SK-N-SH (cell line): ENCODE measurements at regions of chr2 and their contacts with region 1.

Region 1: DNA sequence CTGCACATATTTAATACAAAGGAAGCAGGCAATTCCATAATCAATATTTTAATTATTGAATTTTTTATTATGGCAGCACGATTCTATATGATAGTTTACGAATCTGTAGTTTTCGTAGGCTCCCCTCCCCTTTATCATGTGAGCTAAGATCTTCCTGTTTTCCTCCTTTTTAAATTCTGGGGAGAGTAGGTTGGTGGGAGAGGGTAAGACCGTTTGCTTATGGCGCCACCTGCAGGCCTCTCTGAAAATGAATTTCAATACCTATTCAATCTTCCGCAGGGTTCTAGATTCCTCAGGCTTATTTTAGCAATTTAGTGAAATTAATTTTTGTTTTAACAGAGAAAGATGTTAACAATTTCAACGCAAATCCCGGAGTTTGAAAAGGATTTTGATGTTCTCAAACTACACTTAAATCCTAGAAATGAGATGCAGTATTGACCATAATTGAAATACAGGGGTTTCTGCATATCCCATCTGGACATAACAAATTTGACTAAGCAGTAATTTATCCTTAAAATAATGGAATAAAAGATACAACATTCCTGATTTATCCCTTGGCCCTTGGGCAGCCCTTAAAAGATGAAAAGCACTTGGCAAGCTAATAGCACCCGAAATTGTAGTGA is 12.8 kb upstream of the GBX2 start:
- DNase-seq: peak; percentile 84
- H3K4me3 ChIP-seq: no peak overlapping the region; a peak in 1 of 4 replicates
- H3K27ac ChIP-seq: peak overlapping the region in 1 of 2 experiments; percentile 58; a peak in 2 of 4 replicates
- H3K4me1 ChIP-seq: peaks cover 0 to 16% of the 10 kb centered on the region in 2 experiments; a peak in 3 of 4 replicates
- H3K27me3 ChIP-seq: no peaks in the 10 kb centered on the region
- CTCF ChIP-seq: peak; percentile 89
- EP300 ChIP-seq: no peak
- RAD21 ChIP-seq: peak; percentile 88

Region 2: GRCh38 chr2:235766278-235766677 is 414.7 kb before region 1 on chr2:
- CTCF ChIA-PET with region 1: interaction called, 163 read pairs
- POLR2A ChIA-PET with region 1: no interaction called
- DNase-seq: peak; percentile 81
- H3K4me3 ChIP-seq: no peak overlapping the region; a peak in 1 of 4 replicates
- H3K27ac ChIP-seq: peak overlapping the region in 1 of 2 experiments; percentile 43; a peak in 1 of 4 replicates
- H3K4me1 ChIP-seq: no peaks in the 10 kb centered on the region
- H3K27me3 ChIP-seq: no peaks in the 10 kb centered on the region
- CTCF ChIP-seq: peak; percentile 91
- EP300 ChIP-seq: no peak
- RAD21 ChIP-seq: peak; percentile 84

Region 3: GRCh38 chr2:235779444-235779896 is 401.5 kb before region 1 on chr2:
- CTCF ChIA-PET with region 1: interaction called, 372 read pairs
- POLR2A ChIA-PET with region 1: no interaction called
- DNase-seq: peak; percentile 78
- H3K4me3 ChIP-seq: no peak overlapping the region; a peak in 1 of 4 replicates
- H3K27ac ChIP-seq: no peak overlapping the region
- H3K4me1 ChIP-seq: no peaks in the 10 kb centered on the region
- H3K27me3 ChIP-seq: no peaks in the 10 kb centered on the region
- CTCF ChIP-seq: peak; percentile 95
- EP300 ChIP-seq: no peak
- RAD21 ChIP-seq: peak; percentile 89

Region 4: GRCh38 chr2:235806986-235807750 is 373.8 kb before region 1 on chr2:
- CTCF ChIA-PET with region 1: interaction called, 248 read pairs
- POLR2A ChIA-PET with region 1: no interaction called
- DNase-seq: no peak
- H3K4me3 ChIP-seq: no peak overlapping the region
- H3K27ac ChIP-seq: no peak overlapping the region
- H3K4me1 ChIP-seq: peaks cover 0 to 2% of the 10 kb centered on the region in 2 experiments; a peak in 1 of 4 replicates
- H3K27me3 ChIP-seq: no peaks in the 10 kb centered on the region
- CTCF ChIP-seq: no peak
- EP300 ChIP-seq: no peak
- RAD21 ChIP-seq: no peak

Region 5: DNA sequence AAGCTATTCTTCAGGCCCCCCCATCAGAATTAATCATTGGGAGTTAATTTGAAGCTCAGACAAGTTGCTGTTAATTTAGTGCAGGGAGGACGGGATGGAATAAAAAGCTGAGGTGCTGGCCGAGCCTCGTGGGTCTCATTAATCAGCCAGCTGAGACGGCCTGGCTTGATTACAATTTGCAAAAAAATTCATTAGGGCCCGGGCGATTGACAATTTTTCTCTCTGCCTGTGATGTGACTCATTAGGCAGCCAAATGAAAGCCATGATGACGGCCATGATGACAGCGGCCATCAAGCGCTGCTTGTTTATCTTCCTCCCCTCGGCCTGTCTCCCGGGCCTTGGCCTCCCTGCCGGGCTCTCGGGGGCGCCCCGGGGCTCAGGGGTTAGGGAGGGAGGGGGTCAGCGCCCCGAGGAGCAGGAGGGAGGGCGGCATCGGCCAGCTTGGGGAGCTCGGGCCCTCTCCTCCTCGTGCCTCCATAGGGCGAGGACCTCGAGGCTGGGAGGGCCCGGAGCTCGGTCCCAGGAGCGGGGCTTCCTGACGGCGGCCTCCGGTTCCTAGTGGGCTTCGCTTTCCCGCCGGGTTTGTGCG is 18.0 kb before region 1 on chr2:
- CTCF ChIA-PET with region 1: interaction called, 28 read pairs
- POLR2A ChIA-PET with region 1: no interaction called
- DNase-seq: no peak
- H3K4me3 ChIP-seq: no peak overlapping the region
- H3K27ac ChIP-seq: no peak overlapping the region
- H3K4me1 ChIP-seq: peaks cover 0 to 12% of the 10 kb centered on the region in 2 experiments; a peak in 2 of 4 replicates
- H3K27me3 ChIP-seq: peaks cover 38% of the 10 kb centered on the region
- CTCF ChIP-seq: no peak
- EP300 ChIP-seq: no peak
- RAD21 ChIP-seq: no peak

Region 6: GRCh38 chr2:236193051-236193450 is 12.1 kb after region 1 on chr2:
- CTCF ChIA-PET with region 1: interaction called, 17 read pairs
- POLR2A ChIA-PET with region 1: interaction called, 5 read pairs
- DNase-seq: no peak
- H3K4me3 ChIP-seq: no peak overlapping the region
- H3K27ac ChIP-seq: no peak overlapping the region
- H3K4me1 ChIP-seq: no peaks in the 10 kb centered on the region
- H3K27me3 ChIP-seq: no peaks in the 10 kb centered on the region
- CTCF ChIP-seq: no peak
- EP300 ChIP-seq: no peak
- RAD21 ChIP-seq: no peak